ENCODE measurements at regions of chr17 and their contacts with region 1.

Region 1: GRCh38 chr17:13619462-13619861 is 17.7 kb upstream of the HS3ST3A1 start:
- DNase-seq: no peak
- H3K4me3 ChIP-seq: no peak overlapping the region
- H3K27ac ChIP-seq: no peak overlapping the region
- H3K4me1 ChIP-seq: no peaks in the 10 kb centered on the region
- H3K27me3 ChIP-seq: no peaks in the 10 kb centered on the region
- CTCF ChIP-seq: no peak

Region 2: DNA sequence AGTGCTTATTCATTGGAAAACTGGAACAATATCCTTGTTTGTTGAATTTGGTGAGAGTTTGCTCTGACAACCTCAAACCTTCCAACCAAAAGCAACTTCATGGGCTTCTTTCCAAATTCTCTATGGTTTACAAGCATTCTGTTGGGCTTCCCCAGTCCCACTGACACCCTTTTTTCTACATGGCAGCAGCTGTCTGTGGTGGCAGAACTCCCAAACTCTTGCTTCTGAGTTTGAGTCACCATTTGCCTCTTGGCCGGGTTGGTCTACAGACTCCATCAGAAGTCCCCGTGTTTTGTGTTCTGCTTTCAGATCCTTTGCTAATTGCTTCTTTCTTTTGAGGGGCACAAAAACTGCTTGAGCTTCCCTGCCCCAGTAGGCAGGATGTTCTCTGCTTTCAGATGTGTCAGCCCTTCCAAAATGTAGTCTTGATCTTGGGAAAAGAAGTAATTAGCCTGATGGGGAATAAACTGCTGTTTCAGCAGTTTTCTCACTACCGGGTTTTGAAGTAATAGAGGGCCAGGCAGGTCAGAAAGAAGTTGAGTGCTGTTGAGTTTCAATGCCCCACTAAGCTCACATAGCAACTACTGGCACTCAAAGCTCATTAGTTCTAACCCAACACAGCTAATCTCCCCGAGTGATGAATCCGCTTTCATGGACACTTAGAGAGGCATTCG is 98.4 kb before region 1 on chr17:
- CTCF ChIA-PET with region 1: no interaction called
- POLR2A ChIA-PET with region 1: no interaction called
- intact Hi-C with region 1: loop called (anchors 10 kb)
- DNase-seq: no peak
- H3K4me3 ChIP-seq: no peak overlapping the region
- H3K27ac ChIP-seq: no peak overlapping the region
- H3K4me1 ChIP-seq: no peaks in the 10 kb centered on the region
- H3K27me3 ChIP-seq: no peaks in the 10 kb centered on the region
- CTCF ChIP-seq: no peak

Measured in A673 (cell line).